T-cell (primary cell): ENCODE measurements at regions of chr6 and their contacts with region 1.

Region 1: DNA sequence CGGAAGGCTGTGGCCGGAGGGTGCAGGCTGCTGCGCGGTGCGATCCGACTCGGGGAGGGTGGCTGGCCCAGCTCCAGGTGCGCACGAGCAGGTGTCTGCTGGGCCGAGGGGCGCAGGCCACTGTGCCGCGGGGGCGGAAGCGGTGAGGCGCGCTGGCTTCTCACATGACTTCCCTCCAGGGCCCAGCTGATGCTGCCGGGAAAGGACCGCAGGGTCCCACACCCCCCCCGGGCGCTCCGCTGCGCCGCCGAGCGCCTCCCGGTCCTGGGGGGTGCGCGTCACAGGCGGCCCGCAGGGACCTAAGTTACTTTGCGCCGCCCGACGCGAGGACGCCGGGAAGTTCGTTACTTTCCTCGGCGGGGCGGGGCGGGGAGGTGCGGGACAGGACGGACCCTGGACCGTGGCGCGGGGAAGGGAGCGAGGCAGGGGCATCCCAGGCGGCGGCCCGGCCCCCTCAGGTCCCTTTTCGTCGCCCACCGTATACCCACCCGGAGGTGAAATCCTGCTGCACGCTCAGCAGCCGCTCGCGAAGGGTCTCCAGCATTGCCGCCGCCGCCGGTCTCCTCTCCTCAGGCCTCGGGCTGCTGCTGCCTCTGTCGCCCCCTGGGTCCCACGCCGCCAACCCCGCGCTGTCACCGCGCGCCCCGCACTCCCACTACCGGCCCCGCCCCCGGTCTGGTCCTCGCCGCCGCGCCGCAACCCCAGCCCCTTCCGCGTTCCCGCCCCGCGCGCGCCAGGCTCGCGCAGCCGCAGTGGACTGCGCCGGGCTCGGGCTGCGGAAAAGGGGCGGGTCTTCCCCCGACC is at the start of gene DTNBP1:
- DNase-seq: peak; percentile 56 to 89 (median 75)
- ATAC-seq: peak; percentile 82 to 84 (median 82)
- H3K4me3 ChIP-seq: peak within 1 kb of the TSS; percentile 62 to 75
- H3K4me3 Mint-ChIP-seq: peak within 1 kb of the TSS; percentile 72 to 85 (median 84)
- H3K27ac ChIP-seq: peak within 1 kb of the TSS; percentile 74
- H3K27ac Mint-ChIP-seq: peak within 1 kb of the TSS; percentile 56 to 80
- H3K4me1 ChIP-seq: peaks cover 7 to 11% of the 10 kb centered on the region in 2 experiments
- H3K4me1 Mint-ChIP-seq: peaks cover 36 to 42% (median 40%) of the 10 kb centered on the region in 3 donors
- H3K27me3 ChIP-seq: no peaks in the 10 kb centered on the region
- H3K27me3 Mint-ChIP-seq: peaks cover 0 to 2% of the 10 kb centered on the region in 2 donors
- total RNA-seq, gene DTNBP1: 18.7 to 25.4 (median 19.9) TPM

Region 2: GRCh38 chr6:15305909-15306308 is 356.6 kb before region 1 on chr6:
- CTCF ChIA-PET with region 1: no interaction called
- POLR2A ChIA-PET with region 1: interaction called in 1 of 2 experiments, 10 read pairs
- DNase-seq: no peak
- ATAC-seq: no peak
- H3K4me3 ChIP-seq: no peak overlapping the region
- H3K4me3 Mint-ChIP-seq: peak overlapping the region in 1 of 3 donors; percentile 26
- H3K27ac ChIP-seq: no peak overlapping the region
- H3K27ac Mint-ChIP-seq: peak overlapping the region; percentile 78 to 83
- H3K4me1 ChIP-seq: peaks cover 25 to 30% of the 10 kb centered on the region in 2 experiments
- H3K4me1 Mint-ChIP-seq: peaks cover 70 to 79% (median 79%) of the 10 kb centered on the region in 3 donors
- H3K27me3 ChIP-seq: no peaks in the 10 kb centered on the region
- H3K27me3 Mint-ChIP-seq: no peaks in the 10 kb centered on the region

Region 3: DNA sequence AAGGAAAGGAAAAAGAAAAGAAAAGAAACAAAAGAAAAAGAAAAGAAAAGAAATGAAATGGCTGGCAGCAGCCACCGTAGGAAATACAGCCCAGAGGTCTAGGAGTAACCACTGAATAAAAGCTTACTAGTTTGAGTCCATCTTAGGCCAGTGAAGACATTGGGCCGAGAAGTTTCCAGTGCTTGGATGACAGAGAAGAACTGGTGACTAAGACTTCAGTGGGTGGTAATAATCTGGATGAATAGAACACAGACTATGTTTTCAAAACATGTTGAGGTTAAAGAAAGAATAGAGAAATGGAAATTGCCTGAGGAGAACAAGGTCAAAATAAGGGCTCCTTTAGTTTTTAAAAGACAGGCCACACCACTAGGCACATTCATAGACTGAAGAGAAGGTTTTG is 900.0 kb after region 1 on chr6:
- CTCF ChIA-PET with region 1: no interaction called
- POLR2A ChIA-PET with region 1: interaction called in 1 of 2 experiments, 12 read pairs
- DNase-seq: no peak
- ATAC-seq: no peak
- H3K4me3 ChIP-seq: no peak overlapping the region
- H3K4me3 Mint-ChIP-seq: no peak overlapping the region
- H3K27ac ChIP-seq: no peak overlapping the region
- H3K27ac Mint-ChIP-seq: no peak overlapping the region
- H3K4me1 ChIP-seq: no peaks in the 10 kb centered on the region
- H3K4me1 Mint-ChIP-seq: no peaks in the 10 kb centered on the region
- H3K27me3 ChIP-seq: no peaks in the 10 kb centered on the region
- H3K27me3 Mint-ChIP-seq: no peaks in the 10 kb centered on the region